Gastrocnemius medialis (tissue), 4 donors: ENCODE measurements at regions of chrX and their contacts with region 1.

Region 1: GRCh38 chrX:11261260-11261659 is 32.0 kb upstream of the AMELX start:
- DNase-seq: no peak
- ATAC-seq: no peak
- H3K4me3 ChIP-seq: no peak overlapping the region
- H3K27ac ChIP-seq: no peak overlapping the region
- H3K4me1 ChIP-seq: peaks cover 0 to 5% of the 10 kb centered on the region in 2 donors
- H3K27me3 ChIP-seq: no peaks in the 10 kb centered on the region
- CTCF ChIP-seq: no peak
- POLR2A ChIP-seq: no peak

Region 2: GRCh38 chrX:11341274-11342201 is 80.3 kb after region 1 on chrX:
- in situ Hi-C with region 1: no loop called
- intact Hi-C with region 1: loop called (anchors 10 kb)
- DNase-seq: peak; percentile 24 to 69
- ATAC-seq: peak; percentile 75 to 80
- H3K4me3 ChIP-seq: peak overlapping the region in 2 of 4 donors; percentile 8 to 25
- H3K27ac ChIP-seq: peak overlapping the region; percentile 55 to 86 (median 78)
- H3K4me1 ChIP-seq: peaks cover 12 to 29% of the 10 kb centered on the region in 2 donors
- H3K27me3 ChIP-seq: no peaks in the 10 kb centered on the region
- CTCF ChIP-seq: no peak
- POLR2A ChIP-seq: no peak